Sigmoid colon (tissue), 7 donors: ENCODE measurements at regions of chr7 and their contacts with region 1.

Region 1: DNA sequence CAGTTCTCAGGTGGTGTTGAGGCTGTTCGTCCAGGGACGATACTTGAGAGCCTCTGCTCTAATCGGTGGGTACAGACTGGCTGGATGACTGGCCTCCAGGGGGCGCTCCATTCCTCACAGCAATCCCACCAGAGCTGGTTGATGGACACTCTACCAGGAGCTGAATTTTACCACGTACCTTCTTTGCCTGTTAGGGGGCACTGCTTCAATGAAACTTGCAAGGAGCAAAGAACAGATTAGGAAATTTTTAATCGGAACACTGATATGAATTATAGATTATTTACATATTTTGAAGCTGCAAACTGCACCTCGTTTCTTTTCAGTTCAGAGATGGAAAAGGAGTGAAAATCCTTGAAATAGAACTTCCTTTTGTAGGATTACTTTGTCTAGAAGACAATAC is 44.9 kb downstream of the KBTBD2 start:
- DNase-seq: peak; percentile 94
- H3K4me3 ChIP-seq: no peak overlapping the region
- H3K27ac ChIP-seq: no peak overlapping the region
- H3K4me1 ChIP-seq: peaks cover 0 to 7% (median 2%) of the 10 kb centered on the region in 4 donors
- H3K27me3 ChIP-seq: no peaks in the 10 kb centered on the region
- CTCF ChIP-seq: peak; percentile 84 to 91 (median 87)
- EP300 ChIP-seq: no peak
- POLR2A ChIP-seq: no peak

Region 2: GRCh38 chr7:32680259-32681173 is 166.2 kb before region 1 on chr7:
- intact Hi-C with region 1: no loop called
- DNase-seq: no peak
- H3K4me3 ChIP-seq: no peak overlapping the region
- H3K27ac ChIP-seq: no peak overlapping the region
- H3K4me1 ChIP-seq: no peaks in the 10 kb centered on the region
- H3K27me3 ChIP-seq: no peaks in the 10 kb centered on the region
- CTCF ChIP-seq: no peak
- EP300 ChIP-seq: no peak
- POLR2A ChIP-seq: no peak

Region 3: GRCh38 chr7:32803406-32804141 is 43.1 kb before region 1 on chr7:
- intact Hi-C with region 1: loop called (anchors 5 kb)
- DNase-seq: no peak
- H3K4me3 ChIP-seq: no peak overlapping the region
- H3K27ac ChIP-seq: no peak overlapping the region
- H3K4me1 ChIP-seq: no peaks in the 10 kb centered on the region
- H3K27me3 ChIP-seq: no peaks in the 10 kb centered on the region
- CTCF ChIP-seq: no peak
- EP300 ChIP-seq: no peak
- POLR2A ChIP-seq: no peak

Region 4: GRCh38 chr7:33050535-33051318 is 204.0 kb after region 1 on chr7:
- intact Hi-C with region 1: loop called (anchors 2 kb)
- DNase-seq: no peak
- H3K4me3 ChIP-seq: peak overlapping the region in 1 of 4 donors; percentile 23
- H3K27ac ChIP-seq: peak overlapping the region; percentile 38 to 74 (median 56)
- H3K4me1 ChIP-seq: peaks cover 0 to 30% (median 17%) of the 10 kb centered on the region in 4 donors
- H3K27me3 ChIP-seq: no peaks in the 10 kb centered on the region
- CTCF ChIP-seq: peak; percentile 23 to 65 (median 50)
- EP300 ChIP-seq: no peak
- POLR2A ChIP-seq: no peak

Region 5: DNA sequence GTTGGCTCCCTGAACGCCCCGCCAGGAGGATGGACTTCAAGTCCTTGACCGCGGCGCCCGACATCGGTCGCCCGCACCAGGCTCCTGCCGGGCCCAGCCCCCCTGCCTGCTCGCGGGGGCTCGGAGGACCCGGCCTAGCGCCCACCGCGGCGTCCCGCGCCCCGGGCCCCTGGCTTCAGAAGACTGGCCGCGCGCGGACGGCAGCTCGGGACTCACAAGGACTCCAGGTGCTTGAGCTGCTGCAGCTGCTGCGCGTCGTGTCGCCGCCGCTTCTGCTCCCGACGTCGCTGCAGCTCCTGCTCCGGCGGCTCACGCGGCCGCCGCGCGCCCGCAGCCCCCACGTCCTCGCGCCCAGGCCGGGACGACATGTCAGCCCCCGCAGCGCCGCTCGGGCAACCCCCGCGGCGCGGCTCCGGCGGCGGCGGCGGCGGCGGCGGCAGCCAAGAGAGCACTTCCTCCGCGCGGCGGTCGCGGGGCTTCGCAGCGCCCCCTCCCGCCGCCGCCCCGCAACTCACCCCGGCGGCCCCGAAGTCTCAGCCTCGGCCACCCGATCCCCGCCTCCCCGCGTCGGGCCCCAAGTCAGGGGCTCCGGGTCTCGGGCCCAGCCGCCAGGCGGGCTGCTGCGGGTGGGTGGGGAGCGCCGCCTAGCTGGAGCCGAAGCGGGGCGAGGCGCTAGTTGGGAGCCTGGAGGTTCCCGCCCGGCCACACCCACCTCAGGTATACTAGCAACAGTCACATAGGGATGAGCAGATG is 262.5 kb after region 1 on chr7 and contains the start of gene RP9:
- intact Hi-C with region 1: loop called (anchors 1 kb)
- DNase-seq: peak; percentile 77
- H3K4me3 ChIP-seq: peak within 1 kb of the TSS; percentile 60 to 99 (median 97)
- H3K27ac ChIP-seq: peak within 1 kb of the TSS; percentile 82 to 89 (median 88)
- H3K4me1 ChIP-seq: peaks cover 0 to 39% (median 30%) of the 10 kb centered on the region in 4 donors
- H3K27me3 ChIP-seq: no peaks in the 10 kb centered on the region
- CTCF ChIP-seq: peak in 2 of 4 experiments; percentile 30 to 63
- EP300 ChIP-seq: no peak
- POLR2A ChIP-seq: no peak
- total RNA-seq, gene RP9: 6.9 to 24.6 (median 9.2) TPM